Activated CD4-positive, alpha-beta T cell treated with anti-CD3 and anti-CD28 coated beads, Interleukin-2, amount 10 ng/mL, durations not matched to agents 24 days and 14 days (primary cell): ENCODE measurements at regions of chr1 and their contacts with region 1.

Region 1: GRCh38 chr1:24391882-24392603 is 21.5 kb downstream of the STPG1 start:
- DNase-seq: peak; percentile 88
- H3K4me3 Mint-ChIP-seq: peak overlapping the region; percentile 79
- H3K27ac Mint-ChIP-seq: peak overlapping the region; percentile 87
- H3K4me1 Mint-ChIP-seq: peaks cover 29% of the 10 kb centered on the region
- H3K27me3 Mint-ChIP-seq: no peaks in the 10 kb centered on the region

Region 2: GRCh38 chr1:24070821-24071393 is 321.1 kb before region 1 on chr1:
- intact Hi-C with region 1: loop called (anchors 2 kb)
- DNase-seq: peak; percentile 92
- H3K4me3 Mint-ChIP-seq: no peak overlapping the region
- H3K27ac Mint-ChIP-seq: no peak overlapping the region
- H3K4me1 Mint-ChIP-seq: peaks cover 4% of the 10 kb centered on the region
- H3K27me3 Mint-ChIP-seq: peaks cover 8% of the 10 kb centered on the region

Region 3: DNA sequence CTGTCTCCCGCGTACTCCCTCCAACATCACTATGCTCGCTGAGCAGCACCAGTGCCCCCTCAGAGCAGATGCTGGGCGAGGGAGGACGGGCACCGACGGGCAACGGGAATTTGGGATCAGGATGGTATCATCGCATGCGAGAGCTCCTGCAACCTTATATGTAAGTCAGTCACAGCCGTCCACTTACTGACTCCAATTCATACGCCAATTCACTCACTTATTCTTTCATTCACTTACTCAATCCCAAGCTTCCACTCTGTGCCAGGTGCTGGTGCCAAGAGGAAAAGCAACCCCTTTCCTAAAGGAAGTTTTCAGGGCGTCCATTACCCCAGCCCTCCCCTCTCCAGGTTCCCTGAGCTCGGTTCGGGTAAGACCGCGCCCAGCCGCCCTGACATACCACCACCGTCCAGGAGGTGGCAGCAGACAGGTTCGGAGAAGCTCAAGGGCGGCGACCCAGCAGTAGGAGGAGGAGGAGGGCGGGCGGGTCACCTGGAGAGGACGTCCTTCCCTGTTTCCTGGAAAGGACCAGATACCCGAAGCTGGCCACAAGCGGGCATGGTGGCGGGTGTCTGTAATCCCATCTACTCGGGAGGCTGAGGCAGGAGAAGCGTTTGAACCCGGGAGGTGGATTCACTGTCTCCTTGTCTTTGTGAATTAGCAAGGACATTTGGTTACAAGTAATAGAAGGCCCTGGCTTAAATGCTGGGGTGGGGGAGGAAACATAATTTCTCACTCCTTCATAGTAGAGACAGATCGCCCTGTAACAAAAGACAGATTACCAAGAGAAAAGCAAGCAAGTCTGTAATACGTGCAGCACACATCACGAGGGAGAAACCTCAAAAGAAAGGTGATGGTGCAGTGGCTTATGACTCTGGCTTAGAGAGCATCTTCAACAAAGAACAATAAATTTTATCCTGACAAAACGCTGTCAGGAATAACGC is 241.5 kb before region 1 on chr1:
- intact Hi-C with region 1: loop called (anchors 1 kb)
- DNase-seq: peak; percentile 97
- H3K4me3 Mint-ChIP-seq: peak overlapping the region; percentile 74
- H3K27ac Mint-ChIP-seq: peak overlapping the region; percentile 65
- H3K4me1 Mint-ChIP-seq: peaks cover 15% of the 10 kb centered on the region
- H3K27me3 Mint-ChIP-seq: peaks cover 35% of the 10 kb centered on the region

Region 4: DNA sequence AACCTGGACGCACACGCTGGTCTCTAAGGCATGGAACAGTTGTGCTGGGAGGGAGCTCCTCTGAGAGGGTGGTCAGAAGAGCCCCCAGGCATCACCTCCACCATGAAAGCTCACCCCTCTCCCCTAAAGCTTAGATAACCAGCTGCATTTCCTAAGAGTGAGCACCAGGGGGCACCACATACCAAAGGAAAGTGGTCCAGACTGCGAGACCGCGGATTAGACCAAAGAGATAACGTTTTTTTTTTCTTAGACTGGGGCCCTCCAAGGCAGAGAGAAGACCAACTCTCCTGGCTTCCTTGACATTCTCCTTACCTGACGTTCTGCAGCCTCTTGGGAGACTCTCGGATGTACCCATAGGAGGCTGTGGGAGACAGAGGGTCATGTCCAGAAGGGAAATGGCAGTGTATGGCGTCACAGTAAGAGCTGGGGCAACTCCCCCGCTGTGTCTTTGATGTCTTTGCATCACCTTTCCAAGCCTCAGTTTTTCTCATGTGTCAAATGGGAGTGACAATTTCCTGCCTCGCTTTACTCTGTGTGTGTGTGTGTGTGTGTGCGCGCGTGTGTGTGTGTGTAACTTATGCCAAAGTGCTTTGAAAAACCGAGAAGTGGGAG is 192.6 kb before region 1 on chr1:
- intact Hi-C with region 1: loop called (anchors 1 kb)
- DNase-seq: peak; percentile 92
- H3K4me3 Mint-ChIP-seq: peak overlapping the region; percentile 51
- H3K27ac Mint-ChIP-seq: no peak overlapping the region
- H3K4me1 Mint-ChIP-seq: peaks cover 31% of the 10 kb centered on the region
- H3K27me3 Mint-ChIP-seq: peaks cover 3% of the 10 kb centered on the region

Region 5: DNA sequence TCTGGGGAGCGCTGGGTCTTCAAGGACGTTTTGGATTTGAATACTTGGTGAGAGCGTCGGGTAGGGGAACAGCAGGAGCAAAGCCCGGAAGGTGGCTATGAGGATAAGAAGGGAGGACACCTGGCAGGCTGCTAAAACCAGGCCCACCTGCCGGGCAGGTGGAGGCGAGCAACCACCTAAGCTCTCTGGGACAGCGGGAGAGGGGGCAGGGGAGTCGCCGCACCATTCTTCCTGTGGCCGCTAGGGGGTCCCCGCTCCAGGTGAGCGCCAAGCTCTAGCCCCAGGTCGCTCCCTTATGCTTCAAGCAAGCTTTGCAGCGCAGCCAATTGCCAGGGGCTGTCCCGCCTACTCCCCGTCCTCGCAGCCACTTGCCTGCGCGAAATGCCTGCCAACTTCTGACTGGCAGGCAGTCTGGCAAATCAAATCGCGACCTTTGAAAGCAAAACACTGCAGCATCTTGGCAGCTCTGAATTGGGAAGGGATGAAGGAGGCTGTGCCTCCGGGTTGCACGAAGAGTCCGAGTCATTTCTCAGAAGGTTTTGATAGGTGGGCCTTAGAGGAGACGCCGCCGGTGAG is 23.4 kb after region 1 on chr1 and contains the start of gene NIPAL3:
- intact Hi-C with region 1: loop called (anchors 2 kb)
- DNase-seq: peak; percentile 99
- H3K4me3 Mint-ChIP-seq: peak within 1 kb of the TSS; percentile 88
- H3K27ac Mint-ChIP-seq: peak within 1 kb of the TSS; percentile 90
- H3K4me1 Mint-ChIP-seq: peaks cover 53% of the 10 kb centered on the region
- H3K27me3 Mint-ChIP-seq: no peaks in the 10 kb centered on the region
- total RNA-seq, gene NIPAL3: 25.1 and 26.3 TPM in 2 replicates